ENCODE measurements at regions of chr14 and their contacts with region 1.

Region 1: DNA sequence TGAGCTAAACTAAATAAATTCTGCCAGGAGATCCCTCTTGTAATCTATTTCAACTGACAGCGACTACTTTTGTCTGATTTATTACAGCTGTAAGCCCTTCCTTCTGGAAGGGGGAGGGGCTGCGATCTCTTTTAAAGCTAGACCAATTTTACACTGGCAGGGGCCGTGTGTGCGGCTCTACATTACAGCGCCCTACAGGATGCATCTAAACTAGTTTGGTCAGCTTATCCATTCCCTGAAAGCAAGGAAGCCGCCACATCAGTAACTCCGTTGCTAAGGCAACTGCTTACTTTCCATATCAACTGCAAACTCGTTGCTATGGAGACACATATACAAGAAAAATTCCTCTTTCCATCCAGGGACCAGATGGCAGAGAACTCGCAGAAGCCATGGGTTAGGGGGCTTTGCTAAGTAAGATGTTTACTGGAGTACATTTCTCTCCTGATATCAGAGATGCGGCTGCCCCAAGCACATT is 17.4 kb downstream of the FOXN3 start:
- DNase-seq: peak in 1 of 2 donors; percentile 52
- H3K4me3 ChIP-seq: no peak overlapping the region
- CTCF ChIP-seq: no peak
- POLR2A ChIP-seq: no peak

Region 2: GRCh38 chr14:88063845-88064244 is 1335.8 kb before region 1 on chr14:
- intact Hi-C with region 1: no loop called
- DNase-seq: no peak
- H3K4me3 ChIP-seq: no peak overlapping the region
- CTCF ChIP-seq: no peak
- POLR2A ChIP-seq: no peak

Region 3: DNA sequence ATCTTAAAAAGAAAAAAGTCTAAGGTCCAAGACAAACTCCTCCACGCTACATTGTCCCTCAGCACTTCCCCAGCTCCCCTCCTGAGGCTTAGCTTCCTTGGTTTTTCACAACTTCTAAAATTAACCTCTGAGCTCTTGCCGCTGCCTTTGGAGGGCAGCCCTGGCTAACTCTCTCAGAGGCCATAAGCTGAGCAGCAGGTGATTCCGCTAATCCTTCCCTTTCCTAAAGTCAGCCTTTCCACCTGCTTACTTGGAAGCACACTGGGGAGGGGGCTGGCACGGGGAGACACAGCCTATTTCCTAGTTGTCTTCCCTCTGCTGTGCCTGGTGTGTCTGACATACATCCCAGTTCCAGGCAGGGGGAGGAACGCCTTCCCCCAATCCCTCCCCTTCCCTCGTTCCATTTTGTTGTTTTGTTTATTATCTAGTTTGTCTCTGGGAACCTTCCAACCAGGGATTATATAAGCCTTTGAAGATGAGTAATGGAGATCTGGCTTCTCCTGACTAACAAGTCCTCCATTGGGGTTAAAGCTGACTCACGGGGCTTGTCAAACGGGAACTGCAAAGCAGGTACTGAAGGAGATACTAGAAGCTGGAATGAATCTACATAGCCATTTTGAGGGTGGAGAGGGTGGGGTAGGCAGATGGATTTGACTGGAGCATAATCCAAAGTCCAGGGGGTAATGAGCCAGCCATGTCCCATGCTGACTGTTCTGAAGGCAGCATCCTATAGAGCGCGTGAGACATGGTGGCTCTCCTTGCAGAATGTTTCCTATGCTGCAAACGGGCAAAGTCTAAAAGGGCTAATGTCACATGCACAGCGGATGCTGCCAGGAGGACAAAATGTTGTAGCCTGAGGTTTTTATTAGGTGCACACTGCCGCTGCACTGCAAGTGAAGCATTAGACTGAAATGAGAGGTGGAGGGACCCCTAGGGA is 213.4 kb before region 1 on chr14:
- intact Hi-C with region 1: loop called (anchors 10 kb)
- DNase-seq: no peak
- H3K4me3 ChIP-seq: no peak overlapping the region
- CTCF ChIP-seq: no peak
- POLR2A ChIP-seq: no peak

Region 4: GRCh38 chr14:89368490-89369477 is 30.8 kb before region 1 on chr14:
- intact Hi-C with region 1: loop called (anchors 2 kb)
- DNase-seq: no peak
- H3K4me3 ChIP-seq: no peak overlapping the region
- CTCF ChIP-seq: no peak
- POLR2A ChIP-seq: no peak

Measured in lower leg skin (tissue), 4 donors.